ENCODE measurements at regions of chr1 and their contacts with region 1.

Region 1: GRCh38 chr1:244224487-244225430 is 173.7 kb downstream of the ZBTB18 start:
- DNase-seq: no peak
- H3K4me3 ChIP-seq: no peak overlapping the region
- H3K27ac ChIP-seq: no peak overlapping the region
- H3K4me1 ChIP-seq: no peaks in the 10 kb centered on the region
- H3K27me3 ChIP-seq: no peaks in the 10 kb centered on the region
- CTCF ChIP-seq: no peak
- EP300 ChIP-seq: no peak
- POLR2A ChIP-seq: no peak
- RAD21 ChIP-seq: no peak

Region 2: GRCh38 chr1:244210884-244211558 is 13.7 kb before region 1 on chr1:
- CTCF ChIA-PET with region 1: interaction called, 22 read pairs
- POLR2A ChIA-PET with region 1: no interaction called
- DNase-seq: peak; percentile 41 to 83
- H3K4me3 ChIP-seq: no peak overlapping the region
- H3K27ac ChIP-seq: no peak overlapping the region; the same call in 1 of the 2 replicates
- H3K4me1 ChIP-seq: peaks cover 0 to 5% (median 2%) of the 10 kb centered on the region in 4 experiments; a peak in 5 of 7 replicates
- H3K27me3 ChIP-seq: 0 out of 7 replicates have a peak, but pooled peaks cover 0 to 2% (median 0%) of the 10 kb centered on the region in 4 experiments
- CTCF ChIP-seq: peak; percentile 76 to 96 (median 91)
- EP300 ChIP-seq: no peak
- POLR2A ChIP-seq: no peak
- RAD21 ChIP-seq: peak; percentile 74 to 81